ENCODE measurements at regions of chr7 and their contacts with region 1.

Region 1: GRCh38 chr7:17706734-17707133 is 233.6 kb downstream of the SNX13 start:
- DNase-seq: peak; percentile 60
- ATAC-seq: peak; percentile 89
- H3K4me3 Mint-ChIP-seq: no peak overlapping the region
- H3K27ac Mint-ChIP-seq: no peak overlapping the region
- H3K4me1 Mint-ChIP-seq: peaks cover 7% of the 10 kb centered on the region; the same call in 1 of the 2 replicates
- H3K27me3 Mint-ChIP-seq: no peaks in the 10 kb centered on the region
- CTCF ChIP-seq: peak; percentile 46; the same call in 1 of the 2 replicates

Region 2: DNA sequence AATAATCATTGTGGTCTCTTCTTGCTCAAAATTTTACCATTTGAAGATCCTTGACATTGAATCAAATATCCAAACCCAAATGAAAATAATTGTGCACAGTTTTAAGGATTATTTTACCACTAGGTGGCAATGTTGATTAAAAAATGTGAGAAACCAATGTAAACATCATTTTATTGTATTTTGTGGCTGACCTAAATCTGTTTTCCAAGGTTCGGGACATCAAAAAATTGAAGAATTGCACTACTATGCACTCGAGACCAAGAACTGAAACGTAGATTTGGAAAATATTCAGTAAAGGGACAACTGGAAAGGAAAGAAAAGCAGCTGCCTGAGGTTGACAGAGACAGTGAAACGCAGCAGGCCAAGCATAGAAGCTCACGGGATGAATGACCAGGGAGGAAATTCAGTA is 25.8 kb before region 1 on chr7:
- CTCF ChIA-PET with region 1: interaction called, 16 read pairs
- POLR2A ChIA-PET with region 1: no interaction called
- DNase-seq: no peak
- ATAC-seq: peak; percentile 24; the same call in 1 of the 2 replicates
- H3K4me3 Mint-ChIP-seq: no peak overlapping the region
- H3K27ac Mint-ChIP-seq: no peak overlapping the region
- H3K4me1 Mint-ChIP-seq: peaks cover 12% of the 10 kb centered on the region
- H3K27me3 Mint-ChIP-seq: no peaks in the 10 kb centered on the region
- CTCF ChIP-seq: peak; percentile 40

Region 3: GRCh38 chr7:17991866-17992648 is 285.3 kb after region 1 on chr7:
- CTCF ChIA-PET with region 1: interaction called, 10 read pairs
- POLR2A ChIA-PET with region 1: no interaction called
- DNase-seq: peak; percentile 71
- ATAC-seq: peak; percentile 89
- H3K4me3 Mint-ChIP-seq: no peak overlapping the region
- H3K27ac Mint-ChIP-seq: no peak overlapping the region; the same call in 1 of the 2 replicates
- H3K4me1 Mint-ChIP-seq: peaks cover 6% of the 10 kb centered on the region
- H3K27me3 Mint-ChIP-seq: no peaks in the 10 kb centered on the region
- CTCF ChIP-seq: peak; percentile 33; the same call in 1 of the 2 replicates

Region 4: DNA sequence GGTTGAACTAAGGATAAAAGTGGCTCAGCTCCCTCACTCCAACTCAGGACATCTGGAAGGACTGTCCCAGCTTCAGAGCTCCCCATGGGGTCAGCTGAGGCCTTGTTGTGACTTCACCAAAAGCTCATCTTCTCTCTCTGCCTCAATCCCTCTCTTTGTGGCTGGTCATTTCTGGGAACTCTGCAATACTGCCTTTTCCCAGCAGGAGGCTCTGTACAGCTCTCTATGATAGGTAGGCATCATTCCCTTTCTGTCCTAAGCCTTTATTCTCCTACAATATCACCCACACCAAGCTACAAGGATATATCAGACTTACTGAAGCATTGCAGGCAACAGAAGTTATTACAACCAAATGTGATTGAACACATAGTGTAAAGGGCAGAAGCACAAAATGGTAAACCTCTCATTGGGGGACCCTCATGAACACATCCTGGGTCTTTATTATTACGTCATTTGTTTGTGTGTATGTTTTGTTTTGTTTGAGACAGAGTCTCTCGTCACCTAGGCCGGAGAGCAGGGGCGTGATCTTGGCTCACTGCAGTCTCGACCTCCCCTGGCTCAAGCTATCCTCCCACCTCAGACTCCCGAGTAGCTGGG is 357.6 kb after region 1 on chr7:
- CTCF ChIA-PET with region 1: interaction called, 13 read pairs
- POLR2A ChIA-PET with region 1: no interaction called
- DNase-seq: peak; percentile 71
- ATAC-seq: peak; percentile 93
- H3K4me3 Mint-ChIP-seq: no peak overlapping the region
- H3K27ac Mint-ChIP-seq: no peak overlapping the region
- H3K4me1 Mint-ChIP-seq: peaks cover 14% of the 10 kb centered on the region
- H3K27me3 Mint-ChIP-seq: no peaks in the 10 kb centered on the region
- CTCF ChIP-seq: peak; percentile 41

Region 5: DNA sequence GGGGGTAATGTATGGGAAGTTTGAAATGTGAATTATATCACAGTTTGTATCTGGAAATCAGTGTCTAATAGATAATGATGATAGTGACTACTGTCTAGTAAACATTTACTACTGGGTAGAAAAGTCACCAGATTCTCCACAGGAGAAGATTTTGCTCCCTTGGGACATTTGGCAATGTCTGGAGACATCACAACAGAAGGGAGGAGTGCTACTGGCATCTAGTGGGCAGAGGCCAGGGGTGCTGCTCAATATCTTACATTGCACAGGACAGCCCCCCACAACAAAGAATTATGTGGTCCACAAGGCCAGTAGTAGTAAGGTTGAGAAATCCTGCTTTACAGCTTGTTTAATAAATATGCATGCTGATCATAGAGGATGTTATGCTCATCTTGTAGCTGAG is 413.3 kb after region 1 on chr7:
- CTCF ChIA-PET with region 1: interaction called, 16 read pairs
- POLR2A ChIA-PET with region 1: no interaction called
- DNase-seq: peak; percentile 38
- ATAC-seq: peak; percentile 90
- H3K4me3 Mint-ChIP-seq: no peak overlapping the region
- H3K27ac Mint-ChIP-seq: no peak overlapping the region
- H3K4me1 Mint-ChIP-seq: no peaks in the 10 kb centered on the region
- H3K27me3 Mint-ChIP-seq: no peaks in the 10 kb centered on the region
- CTCF ChIP-seq: no peak

Measured in WTC11 (cell line).